Right cardiac atrium (tissue), 5 donors: ENCODE measurements at regions of chr15 and their contacts with region 1.

Region 1: DNA sequence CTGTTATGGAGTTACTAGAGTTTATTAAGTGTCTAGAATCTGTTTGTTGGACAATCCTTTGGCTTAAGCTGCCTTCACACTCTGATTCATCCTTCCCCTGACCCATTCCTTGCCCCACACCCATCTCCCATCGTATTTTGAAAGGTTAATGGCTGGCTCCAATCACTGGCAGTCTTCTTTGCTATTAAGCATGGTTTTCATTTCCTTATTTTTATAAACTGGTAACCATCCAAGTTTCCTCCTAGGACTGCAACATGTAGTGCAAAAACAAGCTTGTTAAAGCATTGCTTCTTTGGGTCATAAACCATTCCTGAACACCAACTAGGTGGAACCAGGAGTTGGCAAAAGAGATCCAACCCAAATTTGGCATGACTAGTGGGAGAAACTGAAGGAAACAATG is 148.4 kb downstream of the DTWD1 start:
- DNase-seq: no peak
- ATAC-seq: no peak
- H3K4me3 ChIP-seq: no peak overlapping the region
- H3K27ac ChIP-seq: no peak overlapping the region
- H3K4me1 ChIP-seq: no peaks in the 10 kb centered on the region
- H3K27me3 ChIP-seq: no peaks in the 10 kb centered on the region

Region 2: GRCh38 chr15:49706805-49707204 is 62.4 kb before region 1 on chr15:
- intact Hi-C with region 1: no loop called
- DNase-seq: no peak
- ATAC-seq: no peak
- H3K4me3 ChIP-seq: no peak overlapping the region
- H3K27ac ChIP-seq: no peak overlapping the region
- H3K4me1 ChIP-seq: no peaks in the 10 kb centered on the region
- H3K27me3 ChIP-seq: no peaks in the 10 kb centered on the region

Region 3: DNA sequence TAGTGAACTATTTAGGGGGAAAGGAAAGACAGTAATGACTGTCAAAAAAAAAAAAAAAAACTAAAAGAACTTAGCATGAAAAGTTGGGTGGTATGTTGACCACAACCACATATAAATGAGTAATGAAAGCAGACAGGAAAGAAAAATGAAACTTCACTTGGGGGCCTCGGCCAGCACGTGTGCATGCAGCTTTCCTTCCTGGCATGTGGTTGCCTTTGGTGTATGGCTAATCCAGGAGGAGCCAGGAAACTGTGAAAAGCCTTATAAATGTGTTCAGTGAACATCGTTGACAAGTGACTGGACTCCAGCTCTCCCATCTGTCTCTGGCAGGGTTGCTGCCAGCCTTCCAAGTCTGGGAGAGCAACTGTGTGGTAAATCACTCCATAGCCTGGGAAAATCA is 46.7 kb after region 1 on chr15:
- intact Hi-C with region 1: loop called in 1 of 4 experiments (anchors 10 kb)
- DNase-seq: peak; percentile 20 to 52 (median 36)
- ATAC-seq: peak; percentile 55 to 61
- H3K4me3 ChIP-seq: no peak overlapping the region
- H3K27ac ChIP-seq: no peak overlapping the region
- H3K4me1 ChIP-seq: no peaks in the 10 kb centered on the region
- H3K27me3 ChIP-seq: no peaks in the 10 kb centered on the region

Region 4: DNA sequence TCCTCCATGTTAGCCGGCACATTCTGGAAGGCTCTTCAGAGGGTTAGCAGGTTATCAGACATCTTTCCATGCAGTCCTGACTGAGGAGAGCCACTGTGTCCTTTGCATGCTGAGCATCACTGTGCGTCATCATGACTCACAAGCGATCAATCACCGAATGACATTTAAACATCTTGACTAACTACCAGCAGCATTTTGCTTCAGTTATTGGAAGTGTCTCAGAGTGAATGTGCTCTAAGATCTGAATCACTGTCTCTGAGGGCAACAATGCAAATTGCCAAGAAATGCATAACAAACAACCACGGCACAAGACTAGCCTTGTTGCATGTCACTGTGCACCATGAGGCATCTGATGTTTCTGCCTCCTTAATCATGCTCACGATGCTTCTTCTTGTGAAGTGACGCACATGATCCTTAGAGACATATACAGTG is 368.1 kb after region 1 on chr15:
- intact Hi-C with region 1: no loop called
- DNase-seq: no peak
- ATAC-seq: no peak
- H3K4me3 ChIP-seq: no peak overlapping the region
- H3K27ac ChIP-seq: no peak overlapping the region
- H3K4me1 ChIP-seq: no peaks in the 10 kb centered on the region
- H3K27me3 ChIP-seq: no peaks in the 10 kb centered on the region